Calu3 (cell line): ENCODE measurements at regions of chr6 and their contacts with region 1.

Region 1: GRCh38 chr6:130282234-130282995 is 59.7 kb upstream of the SAMD3 start:
- DNase-seq: no peak
- H3K4me3 Mint-ChIP-seq: no peak overlapping the region
- H3K27ac Mint-ChIP-seq: no peak overlapping the region
- H3K4me1 Mint-ChIP-seq: no peaks in the 10 kb centered on the region
- H3K27me3 Mint-ChIP-seq: peaks cover 12% of the 10 kb centered on the region
- CTCF ChIP-seq: no peak

Region 2: GRCh38 chr6:130037207-130037811 is 245.1 kb before region 1 on chr6:
- CTCF ChIA-PET with region 1: no interaction called
- intact Hi-C with region 1: loop called (anchors 5 kb)
- DNase-seq: no peak
- H3K4me3 Mint-ChIP-seq: no peak overlapping the region
- H3K27ac Mint-ChIP-seq: no peak overlapping the region
- H3K4me1 Mint-ChIP-seq: no peaks in the 10 kb centered on the region
- H3K27me3 Mint-ChIP-seq: no peaks in the 10 kb centered on the region
- CTCF ChIP-seq: peak; percentile 31

Region 3: DNA sequence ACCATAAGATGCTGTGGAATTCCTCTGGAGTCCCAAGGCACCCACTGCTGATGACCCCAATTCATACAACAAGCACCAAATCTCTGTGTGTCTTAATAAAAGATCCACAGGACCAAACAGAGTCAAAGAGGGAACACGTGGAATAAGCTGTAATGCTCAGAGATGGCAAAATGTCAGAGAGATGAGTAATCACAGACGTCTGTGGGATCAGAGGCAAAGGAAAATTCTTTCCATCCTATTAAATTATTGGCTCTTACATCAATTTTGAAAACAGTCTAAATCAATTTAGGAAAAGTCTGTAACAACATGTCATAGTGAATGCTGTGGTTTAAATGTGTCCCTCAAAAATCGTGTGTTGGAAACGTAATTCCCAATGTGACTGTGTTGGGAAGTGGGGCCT is 42.2 kb before region 1 on chr6:
- CTCF ChIA-PET with region 1: no interaction called
- intact Hi-C with region 1: loop called (anchors 5 kb)
- DNase-seq: no peak
- H3K4me3 Mint-ChIP-seq: no peak overlapping the region
- H3K27ac Mint-ChIP-seq: no peak overlapping the region
- H3K4me1 Mint-ChIP-seq: no peaks in the 10 kb centered on the region
- H3K27me3 Mint-ChIP-seq: no peaks in the 10 kb centered on the region
- CTCF ChIP-seq: no peak

Region 4: DNA sequence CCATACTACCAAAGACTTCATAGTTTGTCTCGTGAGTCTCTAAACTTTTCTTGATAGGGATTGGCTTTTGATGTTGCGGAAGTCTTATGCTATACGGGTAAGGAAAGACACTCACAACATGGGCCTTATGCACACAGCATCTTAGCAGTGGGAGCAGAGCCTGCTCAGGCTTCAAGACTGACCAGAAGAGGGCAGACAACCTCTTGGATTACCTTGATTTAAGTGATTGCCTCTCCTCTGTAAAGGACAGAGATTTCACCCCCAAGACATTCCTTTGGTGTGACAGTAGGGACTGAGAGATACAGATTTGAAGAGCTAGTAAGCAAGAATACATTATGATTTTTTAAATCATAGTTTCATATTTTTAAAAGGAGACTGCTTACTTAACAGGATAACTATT is 11.4 kb after region 1 on chr6:
- CTCF ChIA-PET with region 1: no interaction called
- intact Hi-C with region 1: no loop called
- DNase-seq: peak; percentile 40
- H3K4me3 Mint-ChIP-seq: no peak overlapping the region
- H3K27ac Mint-ChIP-seq: no peak overlapping the region
- H3K4me1 Mint-ChIP-seq: no peaks in the 10 kb centered on the region
- H3K27me3 Mint-ChIP-seq: peaks cover 24% of the 10 kb centered on the region
- CTCF ChIP-seq: no peak